GM12878 (cell line): ENCODE measurements at regions of chr2 and their contacts with region 1.

Region 1: DNA sequence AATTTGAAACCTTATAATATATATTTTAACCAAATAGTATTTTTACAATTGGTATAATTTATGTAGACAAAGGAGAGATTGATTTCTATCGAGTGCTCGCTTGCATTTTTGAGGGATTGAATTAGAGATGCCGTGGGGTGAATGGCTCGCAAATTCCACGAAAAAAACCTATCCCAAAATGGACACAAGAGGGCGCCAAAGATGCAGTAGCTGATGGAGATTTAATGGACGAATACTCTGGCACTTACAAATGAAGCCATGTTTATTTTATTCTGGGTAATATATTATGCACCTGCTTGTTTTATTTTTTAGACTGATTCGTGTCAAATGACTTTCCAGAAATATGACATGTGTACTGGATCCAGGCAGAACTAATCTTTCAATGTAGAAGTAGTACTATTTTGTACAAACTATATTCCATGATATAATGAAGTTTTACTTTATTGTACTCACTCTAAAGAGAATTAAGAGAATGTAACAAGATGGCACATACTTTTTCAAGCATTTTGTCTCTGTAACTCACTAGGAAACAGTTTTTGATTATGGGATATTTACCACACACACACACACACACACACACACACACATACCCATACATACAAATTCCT is 505.4 kb downstream of the PLCL1 start:
- DNase-seq: no peak
- ATAC-seq: peak; percentile 67
- H3K4me3 ChIP-seq: no peak overlapping the region
- H3K27ac ChIP-seq: no peak overlapping the region
- H3K4me1 ChIP-seq: no peaks in the 10 kb centered on the region
- H3K27me3 ChIP-seq: peaks cover 1 to 2% of the 10 kb centered on the region in 2 experiments; a peak in 1 of 4 replicates
- CTCF ChIP-seq: peak; percentile 69 to 83 (median 81)
- EP300 ChIP-seq: no peak
- POLR2A ChIP-seq: no peak
- RAD21 ChIP-seq: peak; percentile 79

Region 2: GRCh38 chr2:198144660-198145059 is 165.1 kb before region 1 on chr2:
- CTCF ChIA-PET with region 1: no interaction called
- POLR2A ChIA-PET with region 1: no interaction called
- RAD21 ChIA-PET with region 1: no interaction called
- SMC1A ChIA-PET with region 1: no interaction called
- in situ Hi-C with region 1: no loop called
- intact Hi-C with region 1: no loop called
- DNase-seq: no peak
- ATAC-seq: no peak
- H3K4me3 ChIP-seq: no peak overlapping the region
- H3K27ac ChIP-seq: no peak overlapping the region
- H3K4me1 ChIP-seq: no peaks in the 10 kb centered on the region
- H3K27me3 ChIP-seq: no peaks in the 10 kb centered on the region; a peak in 1 of 4 replicates
- CTCF ChIP-seq: no peak
- EP300 ChIP-seq: no peak
- POLR2A ChIP-seq: no peak
- RAD21 ChIP-seq: no peak

Region 3: DNA sequence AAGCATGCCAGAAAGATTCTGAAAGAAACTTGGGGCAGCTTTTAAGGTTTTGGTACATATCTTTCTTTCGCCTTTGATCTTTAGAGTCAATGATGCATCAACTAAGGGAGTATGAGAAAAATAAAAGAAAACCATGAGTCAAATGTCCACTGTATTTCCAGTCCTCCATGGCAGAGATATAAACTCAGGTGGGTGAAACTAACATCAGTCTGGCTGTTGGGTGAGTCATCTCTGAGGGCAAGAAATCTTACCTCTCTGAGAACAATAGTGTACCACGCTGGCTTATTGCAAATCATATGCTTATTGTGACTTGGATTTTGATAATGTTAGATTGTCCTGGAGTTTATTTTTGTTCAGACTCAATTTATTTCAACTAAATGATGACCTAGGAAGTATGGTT is 15.6 kb after region 1 on chr2:
- CTCF ChIA-PET with region 1: interaction called, 16 read pairs
- POLR2A ChIA-PET with region 1: no interaction called
- RAD21 ChIA-PET with region 1: interaction called, 5 read pairs
- SMC1A ChIA-PET with region 1: interaction called, 9 read pairs
- in situ Hi-C with region 1: no loop called
- intact Hi-C with region 1: no loop called
- DNase-seq: no peak
- ATAC-seq: no peak
- H3K4me3 ChIP-seq: no peak overlapping the region
- H3K27ac ChIP-seq: no peak overlapping the region
- H3K4me1 ChIP-seq: no peaks in the 10 kb centered on the region
- H3K27me3 ChIP-seq: no peaks in the 10 kb centered on the region
- CTCF ChIP-seq: no peak
- EP300 ChIP-seq: no peak
- POLR2A ChIP-seq: no peak
- RAD21 ChIP-seq: no peak

Region 4: GRCh38 chr2:198337368-198337767 is 27.6 kb after region 1 on chr2:
- CTCF ChIA-PET with region 1: interaction called, 10 read pairs
- POLR2A ChIA-PET with region 1: interaction called, 4 read pairs
- RAD21 ChIA-PET with region 1: no interaction called
- SMC1A ChIA-PET with region 1: interaction called, 4 read pairs
- in situ Hi-C with region 1: no loop called
- intact Hi-C with region 1: no loop called
- DNase-seq: no peak
- ATAC-seq: no peak
- H3K4me3 ChIP-seq: no peak overlapping the region
- H3K27ac ChIP-seq: no peak overlapping the region
- H3K4me1 ChIP-seq: no peaks in the 10 kb centered on the region
- H3K27me3 ChIP-seq: peaks cover 0 to 4% of the 10 kb centered on the region in 2 experiments; a peak in 2 of 4 replicates
- CTCF ChIP-seq: no peak
- EP300 ChIP-seq: no peak
- POLR2A ChIP-seq: no peak
- RAD21 ChIP-seq: no peak

Region 5: GRCh38 chr2:199495149-199495548 is 1185.4 kb after region 1 on chr2:
- CTCF ChIA-PET with region 1: interaction called, 311 read pairs
- POLR2A ChIA-PET with region 1: no interaction called
- RAD21 ChIA-PET with region 1: interaction called, 132 read pairs
- SMC1A ChIA-PET with region 1: interaction called, 130 read pairs
- in situ Hi-C with region 1: loop called (anchors 5 kb)
- intact Hi-C with region 1: no loop called
- DNase-seq: no peak
- ATAC-seq: no peak
- H3K4me3 ChIP-seq: no peak overlapping the region
- H3K27ac ChIP-seq: no peak overlapping the region
- H3K4me1 ChIP-seq: no peaks in the 10 kb centered on the region
- H3K27me3 ChIP-seq: no peaks in the 10 kb centered on the region
- CTCF ChIP-seq: no peak
- EP300 ChIP-seq: no peak
- POLR2A ChIP-seq: no peak
- RAD21 ChIP-seq: no peak

Region 6: GRCh38 chr2:199596549-199596948 is 1286.8 kb after region 1 on chr2:
- CTCF ChIA-PET with region 1: interaction called, 6 read pairs
- POLR2A ChIA-PET with region 1: no interaction called
- RAD21 ChIA-PET with region 1: interaction called, 8 read pairs
- SMC1A ChIA-PET with region 1: no interaction called
- in situ Hi-C with region 1: no loop called
- intact Hi-C with region 1: loop called (anchors 10 kb)
- DNase-seq: no peak
- ATAC-seq: peak; percentile 68
- H3K4me3 ChIP-seq: no peak overlapping the region
- H3K27ac ChIP-seq: no peak overlapping the region
- H3K4me1 ChIP-seq: no peaks in the 10 kb centered on the region
- H3K27me3 ChIP-seq: no peaks in the 10 kb centered on the region; a peak in 1 of 4 replicates
- CTCF ChIP-seq: peak; percentile 38 to 53 (median 51)
- EP300 ChIP-seq: no peak
- POLR2A ChIP-seq: no peak
- RAD21 ChIP-seq: no peak